ENCODE measurements at regions of chr14 and their contacts with region 1.

Region 1: GRCh38 chr14:104689109-104689880 is at the start of gene INF2:
- DNase-seq: peak; percentile 86
- H3K4me3 Mint-ChIP-seq: peak within 1 kb of the TSS; percentile 84
- H3K27ac Mint-ChIP-seq: peak within 1 kb of the TSS; percentile 58
- H3K4me1 Mint-ChIP-seq: peaks cover 47% of the 10 kb centered on the region
- H3K27me3 Mint-ChIP-seq: peaks cover 2% of the 10 kb centered on the region
- total RNA-seq, gene INF2: 90.9 and 92.3 TPM in 2 replicates

Region 2: DNA sequence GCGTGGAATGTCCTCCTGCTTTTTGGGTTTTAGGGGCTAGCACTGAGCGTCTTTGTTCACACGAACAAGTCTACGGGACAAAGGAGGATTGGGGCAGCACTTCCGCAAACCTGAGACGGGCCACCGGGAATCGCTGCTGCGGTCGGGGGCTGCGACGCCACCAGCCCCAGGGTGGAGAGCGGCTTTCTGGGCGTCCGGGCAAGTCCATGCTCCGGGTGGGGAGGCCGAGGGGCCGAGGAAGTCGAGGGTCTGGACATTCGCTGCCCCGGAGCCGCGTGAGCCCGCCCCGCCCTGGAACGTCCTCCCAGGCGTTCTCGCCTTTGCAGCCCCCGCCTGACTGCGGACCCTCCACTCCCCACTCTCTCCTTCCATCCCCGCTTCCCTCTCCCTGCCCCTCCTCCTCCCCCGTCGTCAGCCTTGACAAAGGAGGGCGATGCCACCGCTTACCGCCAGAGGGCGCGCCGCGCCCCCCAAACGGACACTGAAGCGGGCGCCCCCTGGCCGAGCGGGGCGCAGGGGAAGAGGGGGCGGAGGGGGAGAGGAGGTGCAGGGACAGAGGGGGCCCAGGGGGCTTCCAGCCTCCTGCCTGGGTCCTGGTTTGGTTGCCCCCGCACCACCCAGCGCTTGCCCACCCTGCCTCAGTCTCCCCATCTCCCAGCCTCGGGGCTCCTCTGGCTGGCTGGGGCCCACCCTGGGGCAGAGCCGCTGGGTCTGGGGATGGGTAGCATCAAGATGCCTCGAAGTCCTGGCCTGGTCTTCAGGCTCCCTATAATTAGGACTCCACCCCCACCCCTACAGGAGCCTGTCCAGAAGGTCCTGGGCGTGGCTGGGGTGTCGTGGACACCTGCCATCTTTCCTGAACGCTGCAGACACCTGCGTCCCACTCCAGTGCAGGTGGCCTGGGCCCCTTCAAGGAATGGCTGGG is 39.0 kb before region 1 on chr14:
- intact Hi-C with region 1: loop called (anchors 5 kb)
- DNase-seq: peak; percentile 89
- H3K4me3 Mint-ChIP-seq: peak overlapping the region; percentile 59
- H3K27ac Mint-ChIP-seq: no peak overlapping the region
- H3K4me1 Mint-ChIP-seq: no peaks in the 10 kb centered on the region
- H3K27me3 Mint-ChIP-seq: peaks cover 11% of the 10 kb centered on the region

Region 3: GRCh38 chr14:104677512-104678332 is 11.6 kb before region 1 on chr14:
- intact Hi-C with region 1: loop called (anchors 1 kb)
- DNase-seq: peak; percentile 92
- H3K4me3 Mint-ChIP-seq: peak overlapping the region; percentile 77
- H3K27ac Mint-ChIP-seq: peak overlapping the region; percentile 85
- H3K4me1 Mint-ChIP-seq: peaks cover 26% of the 10 kb centered on the region
- H3K27me3 Mint-ChIP-seq: peaks cover 16% of the 10 kb centered on the region

Region 4: DNA sequence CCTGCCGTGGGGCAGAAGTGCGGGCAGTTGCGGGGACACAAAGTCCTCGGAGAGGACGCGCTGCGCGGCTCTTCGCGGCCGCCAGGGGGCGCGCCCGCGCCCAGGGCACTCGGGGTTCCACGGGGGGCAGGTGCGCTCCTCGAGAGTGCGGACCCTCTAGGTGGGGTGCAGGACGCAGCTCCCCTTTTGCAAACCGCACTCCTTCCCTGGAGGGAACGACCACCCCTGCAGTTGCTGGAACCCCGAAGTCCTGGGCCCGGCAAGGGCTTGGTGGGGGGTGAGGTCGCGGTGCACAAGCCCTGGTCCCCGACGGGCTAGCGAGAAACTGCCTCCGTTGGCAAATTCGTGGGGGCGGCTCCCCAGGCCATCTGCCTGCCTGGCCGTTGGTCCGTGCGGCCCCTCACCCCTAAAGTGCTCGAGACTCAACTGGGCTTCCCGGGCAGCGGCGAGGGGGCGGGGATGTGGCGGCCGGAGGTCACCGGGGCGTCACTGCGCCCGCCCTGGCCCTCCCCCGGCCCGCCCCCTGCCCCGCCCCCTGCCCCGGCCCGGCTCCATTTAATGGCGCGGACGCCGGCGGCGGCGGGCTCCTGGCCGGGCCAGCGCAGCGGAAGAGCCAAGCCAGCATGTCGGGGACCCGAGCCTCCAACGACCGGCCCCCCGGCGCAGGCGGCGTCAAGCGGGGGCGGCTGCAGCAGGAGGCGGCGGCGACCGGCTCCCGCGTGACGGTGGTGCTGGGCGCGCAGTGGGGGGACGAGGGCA is 34.5 kb after region 1 on chr14 and contains the start of gene ADSS1:
- intact Hi-C with region 1: loop called (anchors 2 kb)
- DNase-seq: peak; percentile 91
- H3K4me3 Mint-ChIP-seq: peak within 1 kb of the TSS; percentile 72
- H3K27ac Mint-ChIP-seq: no peak within 1 kb of the TSS
- H3K4me1 Mint-ChIP-seq: peaks cover 2% of the 10 kb centered on the region
- H3K27me3 Mint-ChIP-seq: peaks cover 2% of the 10 kb centered on the region
- total RNA-seq, gene ADSS1: 0.96 and 1.4 TPM in 2 replicates